CD4-positive, alpha-beta memory T cell (primary cell): ENCODE measurements at regions of chr15 and their contacts with region 1.

Region 1: DNA sequence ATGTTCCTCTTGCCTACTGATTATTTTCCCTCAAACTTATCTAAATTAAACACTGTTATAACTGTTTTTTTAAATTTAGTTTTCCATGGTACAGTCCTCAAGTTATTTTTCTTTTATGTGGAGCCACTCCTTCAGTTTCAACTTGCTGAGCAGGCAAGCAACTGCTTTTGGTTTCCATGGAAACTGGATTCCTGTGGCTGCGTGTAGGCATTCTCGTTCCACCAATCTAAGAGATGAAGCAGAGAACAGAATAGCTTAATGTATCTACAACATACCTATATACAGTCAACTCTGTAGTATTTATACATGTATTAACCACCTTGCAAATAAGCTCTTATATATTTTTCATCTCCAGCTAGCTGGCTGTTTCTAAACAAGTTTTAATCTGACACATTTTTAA is 25.8 kb upstream of the ANXA2 start:
- DNase-seq: no peak
- H3K4me3 ChIP-seq: no peak overlapping the region
- H3K4me3 Mint-ChIP-seq: no peak overlapping the region
- H3K27ac ChIP-seq: no peak overlapping the region
- H3K27ac Mint-ChIP-seq: peak overlapping the region in 4 of 7 donors; percentile 23 to 82 (median 48)
- H3K4me1 ChIP-seq: no peaks in the 10 kb centered on the region
- H3K4me1 Mint-ChIP-seq: peaks cover 0 to 5% (median 4%) of the 10 kb centered on the region in 4 donors
- H3K27me3 ChIP-seq: no peaks in the 10 kb centered on the region
- H3K27me3 Mint-ChIP-seq: no peaks in the 10 kb centered on the region

Region 2: DNA sequence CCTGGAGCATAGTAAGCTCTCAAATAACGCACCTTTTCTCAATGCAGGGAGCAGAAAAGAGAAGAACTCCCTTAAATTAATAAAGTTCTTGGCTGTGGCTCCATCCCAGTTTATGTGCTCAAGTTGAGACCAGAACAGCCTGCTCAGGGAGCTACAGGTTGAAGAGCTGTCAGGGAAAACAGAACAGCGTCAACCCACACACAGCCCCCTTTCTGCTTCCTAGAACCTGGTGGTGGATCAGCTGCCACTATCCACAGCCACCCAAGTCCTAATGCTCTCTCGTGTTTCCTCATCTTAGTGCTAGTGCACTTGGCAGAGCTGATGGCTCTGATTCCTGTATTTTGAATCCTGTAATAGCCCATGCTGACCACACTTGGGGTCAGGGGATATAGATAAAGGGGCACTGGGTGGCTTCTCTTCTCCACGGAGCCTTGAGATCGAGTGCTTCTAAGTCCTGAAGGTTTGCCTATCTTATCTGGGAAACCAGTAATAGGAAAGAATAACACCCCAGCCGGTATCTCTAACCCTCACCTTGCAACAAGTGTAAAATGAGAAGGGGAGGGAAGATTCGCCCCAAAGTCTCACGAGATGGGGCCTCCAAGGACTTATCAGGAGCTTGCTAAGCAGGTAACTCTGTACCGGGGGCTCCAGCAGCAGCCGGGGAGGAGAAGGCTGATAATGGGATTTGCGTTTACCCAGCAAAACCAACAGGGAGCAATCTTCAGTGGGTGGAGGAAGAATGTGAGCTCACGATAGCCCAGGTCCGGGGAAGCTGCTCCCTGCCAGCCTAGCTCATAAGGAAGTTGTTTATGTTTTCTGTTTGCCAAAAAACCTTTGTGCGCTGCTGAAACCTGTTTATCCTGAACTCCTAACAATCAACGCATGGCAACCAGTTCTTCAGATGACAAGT is 191.6 kb after region 1 on chr15:
- CTCF ChIA-PET with region 1: no interaction called
- POLR2A ChIA-PET with region 1: no interaction called
- intact Hi-C with region 1: loop called (anchors 5 kb)
- DNase-seq: no peak
- H3K4me3 ChIP-seq: no peak overlapping the region
- H3K4me3 Mint-ChIP-seq: no peak overlapping the region
- H3K27ac ChIP-seq: no peak overlapping the region
- H3K27ac Mint-ChIP-seq: no peak overlapping the region
- H3K4me1 ChIP-seq: peaks cover 5% of the 10 kb centered on the region
- H3K4me1 Mint-ChIP-seq: peaks cover 16 to 17% (median 17%) of the 10 kb centered on the region in 4 donors
- H3K27me3 ChIP-seq: no peaks in the 10 kb centered on the region
- H3K27me3 Mint-ChIP-seq: peaks cover 0 to 2% of the 10 kb centered on the region in 2 donors